ENCODE measurements at regions of chr10 and their contacts with region 1.

Region 1: DNA sequence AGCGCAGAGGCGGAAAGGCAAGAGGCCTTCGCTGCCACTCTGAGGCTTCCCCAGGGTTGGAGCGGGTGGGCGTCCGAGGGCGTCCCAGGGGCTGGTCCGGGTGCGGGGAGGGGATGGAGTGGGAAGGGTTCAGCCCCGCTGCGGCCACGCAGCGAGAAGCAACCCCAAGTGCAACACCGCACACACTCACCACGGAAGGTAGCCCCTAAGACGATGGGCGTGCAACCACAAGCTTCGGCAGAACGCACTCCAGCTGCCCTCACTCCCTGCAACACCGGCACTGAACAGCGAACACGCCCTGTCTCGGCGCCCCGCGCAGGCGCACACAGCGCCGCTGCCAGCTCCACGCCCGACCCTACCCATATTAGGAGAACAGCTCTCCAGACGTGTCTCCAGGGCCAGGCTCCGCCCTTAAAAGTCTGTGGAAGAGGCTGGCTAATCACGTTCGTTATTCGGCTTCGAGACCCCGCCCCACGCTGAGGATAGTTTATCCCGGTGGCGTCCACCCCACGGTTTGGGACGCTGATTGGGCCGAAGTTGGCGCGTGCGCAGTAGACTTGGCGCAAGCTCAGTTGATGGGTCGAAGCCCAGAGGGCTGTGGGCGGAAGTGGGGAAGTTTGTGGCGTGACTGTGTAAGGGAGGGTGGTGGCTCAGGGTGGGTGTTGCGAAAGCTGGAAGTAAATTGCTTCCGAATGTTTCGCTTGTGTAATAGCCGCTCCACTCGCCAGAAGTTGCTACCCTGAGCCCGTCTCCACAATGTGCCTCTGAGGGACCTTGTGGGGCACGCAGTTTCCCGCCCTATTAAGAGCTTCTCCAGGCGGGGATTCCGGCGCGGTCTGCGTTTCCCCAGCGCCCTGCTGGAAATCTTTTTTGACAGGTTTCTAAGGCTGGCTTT is at the start of gene RSU1:
- DNase-seq: peak; percentile 100
- H3K4me3 Mint-ChIP-seq: peak within 1 kb of the TSS; percentile 93
- H3K27ac Mint-ChIP-seq: peak within 1 kb of the TSS; percentile 91
- H3K4me1 Mint-ChIP-seq: peaks cover 42% of the 10 kb centered on the region
- H3K27me3 Mint-ChIP-seq: peaks cover 10% of the 10 kb centered on the region
- total RNA-seq, gene RSU1: 46.9 and 47.5 TPM in 2 replicates

Region 2: DNA sequence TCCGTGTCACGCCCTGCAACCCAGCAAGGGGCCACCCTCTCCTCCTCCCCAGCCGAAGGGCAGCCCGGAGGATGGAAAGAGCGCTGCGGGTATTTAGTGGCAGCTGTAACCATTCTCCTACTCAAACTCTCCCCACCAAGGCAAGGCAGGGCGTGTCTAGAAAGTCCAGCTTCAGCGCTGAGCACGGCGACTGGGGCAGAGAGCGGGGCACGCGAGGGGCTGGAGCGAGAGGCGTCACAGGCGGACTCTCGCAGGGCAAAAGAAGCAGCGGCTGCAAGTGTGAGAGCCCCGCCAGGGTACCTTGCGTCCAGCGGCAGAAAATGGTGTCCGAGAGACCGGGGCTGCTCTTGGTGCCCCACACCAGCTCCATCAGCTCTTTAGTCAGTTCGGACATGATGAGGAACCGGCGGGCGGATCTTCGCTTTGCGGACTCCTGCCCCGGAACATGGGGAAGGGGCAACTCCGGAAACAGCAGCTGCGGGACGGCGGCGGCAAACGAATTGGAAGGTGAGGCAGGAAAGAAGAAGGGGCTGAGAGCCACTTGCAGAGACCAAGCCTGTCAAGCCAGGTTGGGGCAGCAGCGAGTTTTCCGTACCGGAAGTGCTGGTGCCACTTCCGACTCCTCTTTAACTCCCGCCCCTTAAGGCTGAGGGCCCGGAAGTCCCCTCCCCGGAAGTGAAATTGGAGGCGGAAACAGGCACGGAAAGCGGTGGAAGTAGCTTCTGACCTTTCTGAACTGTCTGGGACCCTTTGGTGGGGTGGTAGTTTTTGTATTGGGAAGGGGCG is 957.3 kb before region 1 on chr10 and contains the start of gene MINDY3:
- intact Hi-C with region 1: loop called (anchors 1 kb)
- DNase-seq: peak; percentile 66
- H3K4me3 Mint-ChIP-seq: peak within 1 kb of the TSS; percentile 99
- H3K27ac Mint-ChIP-seq: peak within 1 kb of the TSS; percentile 93
- H3K4me1 Mint-ChIP-seq: peaks cover 36% of the 10 kb centered on the region
- H3K27me3 Mint-ChIP-seq: peaks cover 19% of the 10 kb centered on the region
- total RNA-seq, gene MINDY3: 14.5 and 16.2 TPM in 2 replicates

Region 3: DNA sequence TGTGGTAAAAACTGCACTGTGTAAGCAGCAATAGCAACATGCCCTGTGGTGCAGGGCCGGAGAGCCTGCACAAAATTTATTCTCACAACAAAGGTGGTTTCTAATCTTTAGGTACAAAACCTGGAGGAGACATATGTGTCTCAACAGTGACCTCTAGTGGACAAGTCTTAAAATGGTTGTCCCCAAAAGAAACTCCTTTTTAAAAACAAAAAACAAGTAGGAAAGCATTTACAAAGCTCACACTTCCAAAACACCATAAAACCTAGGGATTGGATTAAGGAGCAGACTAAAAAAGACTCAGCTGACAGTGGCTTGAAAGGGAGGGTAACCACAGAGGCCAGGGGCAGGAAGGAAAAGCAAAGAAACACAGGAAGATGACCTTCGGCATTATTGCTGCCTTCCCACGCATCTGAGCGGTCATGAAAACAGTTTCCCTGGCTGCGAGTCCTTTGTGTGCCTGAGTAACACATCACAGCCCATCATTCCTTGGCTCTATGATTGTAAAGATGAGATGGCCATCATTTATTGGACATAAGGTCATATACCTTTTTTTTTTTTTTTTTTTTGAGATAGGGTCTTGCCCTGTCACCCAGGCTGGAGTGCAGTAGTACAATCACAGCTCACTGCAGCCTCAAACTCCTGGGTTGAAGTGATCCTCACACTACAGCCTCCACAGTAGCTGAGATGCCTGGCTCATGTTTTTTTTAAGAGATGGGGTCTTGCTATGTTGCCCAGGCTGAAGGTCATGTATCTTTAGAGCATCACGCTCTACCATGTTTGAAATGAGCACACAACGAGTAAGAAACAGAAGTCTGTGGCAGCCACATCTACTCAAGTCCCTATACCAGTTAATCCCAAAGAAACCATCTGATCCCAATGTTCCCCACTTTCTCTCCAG is 39.6 kb before region 1 on chr10:
- intact Hi-C with region 1: loop called (anchors 1 kb)
- DNase-seq: no peak
- H3K4me3 Mint-ChIP-seq: no peak overlapping the region
- H3K27ac Mint-ChIP-seq: peak overlapping the region; percentile 62
- H3K4me1 Mint-ChIP-seq: peaks cover 24% of the 10 kb centered on the region
- H3K27me3 Mint-ChIP-seq: no peaks in the 10 kb centered on the region

Region 4: DNA sequence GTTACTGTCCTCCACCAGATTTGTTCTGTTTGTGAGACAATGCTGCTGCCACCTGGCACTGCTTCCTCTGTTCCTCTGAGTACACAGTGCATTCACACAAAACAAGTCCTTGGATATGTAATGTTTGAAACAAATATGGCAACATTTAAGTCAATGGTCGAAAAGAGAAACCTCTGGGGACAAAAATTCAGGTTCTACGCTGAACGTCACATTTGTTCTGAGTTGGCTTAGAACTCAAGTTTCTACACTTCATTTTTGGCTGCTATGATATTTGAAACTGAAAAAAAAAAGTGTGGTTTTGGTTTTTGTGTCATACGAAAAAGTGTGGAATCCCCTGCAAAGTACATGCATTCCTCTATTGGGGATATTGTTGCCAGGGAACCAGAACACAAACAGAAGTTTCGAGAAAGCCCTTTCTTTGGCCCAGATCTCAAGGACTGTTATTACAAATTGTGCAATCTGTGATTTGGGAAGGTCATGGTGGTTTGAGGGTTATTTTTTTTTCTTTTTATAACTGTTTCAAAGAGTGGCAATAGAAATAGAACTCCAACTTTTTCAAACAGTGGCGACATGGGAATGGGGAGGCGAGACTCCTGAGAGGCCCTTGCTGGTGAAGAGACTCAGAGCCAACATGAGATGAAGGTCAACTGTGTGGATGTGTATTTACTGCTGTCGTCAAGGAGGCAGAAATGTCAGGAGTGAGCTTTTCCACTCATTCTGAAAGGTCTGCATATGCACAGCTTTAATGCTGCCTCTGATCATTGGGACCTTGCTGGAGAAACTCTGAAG is 184.8 kb after region 1 on chr10:
- intact Hi-C with region 1: loop called (anchors 2 kb)
- DNase-seq: peak; percentile 42
- H3K4me3 Mint-ChIP-seq: peak overlapping the region; percentile 64
- H3K27ac Mint-ChIP-seq: peak overlapping the region; percentile 98
- H3K4me1 Mint-ChIP-seq: peaks cover 43% of the 10 kb centered on the region
- H3K27me3 Mint-ChIP-seq: peaks cover 49% of the 10 kb centered on the region

Region 5: GRCh38 chr10:17200912-17201793 is 383.8 kb after region 1 on chr10 and contains the start of gene TRDMT1:
- intact Hi-C with region 1: loop called (anchors 1 kb)
- DNase-seq: peak; percentile 78
- H3K4me3 Mint-ChIP-seq: peak within 1 kb of the TSS; percentile 84
- H3K27ac Mint-ChIP-seq: peak within 1 kb of the TSS; percentile 77
- H3K4me1 Mint-ChIP-seq: peaks cover 27% of the 10 kb centered on the region
- H3K27me3 Mint-ChIP-seq: peaks cover 2% of the 10 kb centered on the region
- total RNA-seq, gene TRDMT1: 3.3 and 4.2 TPM in 2 replicates

Region 6: GRCh38 chr10:17643755-17644484 is 826.5 kb after region 1 on chr10 and contains the start of gene STAM:
- intact Hi-C with region 1: loop called (anchors 1 kb)
- DNase-seq: peak; percentile 87
- H3K4me3 Mint-ChIP-seq: peak within 1 kb of the TSS; percentile 99
- H3K27ac Mint-ChIP-seq: peak within 1 kb of the TSS; percentile 100
- H3K4me1 Mint-ChIP-seq: peaks cover 55% of the 10 kb centered on the region
- H3K27me3 Mint-ChIP-seq: no peaks in the 10 kb centered on the region
- total RNA-seq, gene STAM: 23.3 and 26.8 TPM in 2 replicates

Measured in activated T-helper 1 cell treated with anti-CD3 and anti-CD28 coated beads, Interleukin-12 subunit alpha, Interleukin-12 subunit beta, Interleukin-2, Interleukin-4 antibody, amounts not matched to agents 30 ng/mL and 10 ng/mL and 1 ng/mL, durations not matched to agents 14 hours and 24 hours and 36 hours (primary cell).